IMR-90 (cell line): ENCODE measurements at regions of chr11 and their contacts with region 1.

Region 1: DNA sequence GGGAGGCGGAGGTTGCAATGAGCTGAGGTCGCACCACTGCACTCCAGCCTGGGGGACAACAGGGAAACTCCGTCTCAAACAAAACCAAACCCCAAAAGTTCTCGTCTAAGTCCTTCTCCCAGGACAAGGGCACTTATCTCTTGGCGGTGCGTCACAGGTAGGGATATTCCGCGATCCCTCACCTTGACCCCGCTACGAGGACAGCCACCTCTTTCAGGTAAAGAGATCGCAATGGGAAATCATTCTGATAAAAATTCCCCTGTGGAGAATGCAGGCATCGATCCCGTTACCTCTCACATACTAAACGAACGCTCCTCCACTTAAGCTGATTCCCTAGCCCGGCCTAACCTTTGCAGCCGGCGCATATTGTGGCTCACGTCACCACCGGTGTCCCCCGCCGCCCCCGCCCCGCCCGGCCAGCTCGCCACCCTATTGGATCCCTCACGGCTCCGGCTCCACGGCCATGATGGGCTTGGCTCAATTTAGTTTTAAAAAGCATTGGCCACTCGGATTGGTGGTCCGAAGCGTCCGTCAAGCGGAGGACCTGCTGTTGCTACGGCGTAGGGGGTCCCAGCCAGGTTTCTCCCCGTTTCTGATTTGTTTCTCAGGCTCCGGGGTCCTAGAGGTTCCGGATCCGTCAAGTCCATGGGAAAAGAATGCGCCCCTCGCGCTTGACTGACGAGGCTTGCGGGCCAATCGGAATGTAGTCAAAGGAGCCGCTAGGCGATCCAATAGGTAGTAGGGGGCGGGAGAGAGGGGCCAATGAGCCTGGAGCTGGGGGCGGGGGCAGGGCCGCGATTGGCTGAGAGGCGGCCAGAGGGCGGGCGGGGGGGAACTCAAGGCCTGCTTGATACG is 439 bp upstream of the PPP6R3 start:
- DNase-seq: peak; percentile 98
- ATAC-seq: peak; percentile 91
- H3K4me3 ChIP-seq: peak overlapping the region; percentile 90
- H3K27ac ChIP-seq: peak overlapping the region; percentile 88
- H3K4me1 ChIP-seq: peaks cover 5% of the 10 kb centered on the region
- H3K27me3 ChIP-seq: peaks cover 3% of the 10 kb centered on the region; the same call in 1 of the 2 replicates
- CTCF ChIP-seq: no peak
- POLR2A ChIP-seq: no peak
- RAD21 ChIP-seq: no peak

Region 2: DNA sequence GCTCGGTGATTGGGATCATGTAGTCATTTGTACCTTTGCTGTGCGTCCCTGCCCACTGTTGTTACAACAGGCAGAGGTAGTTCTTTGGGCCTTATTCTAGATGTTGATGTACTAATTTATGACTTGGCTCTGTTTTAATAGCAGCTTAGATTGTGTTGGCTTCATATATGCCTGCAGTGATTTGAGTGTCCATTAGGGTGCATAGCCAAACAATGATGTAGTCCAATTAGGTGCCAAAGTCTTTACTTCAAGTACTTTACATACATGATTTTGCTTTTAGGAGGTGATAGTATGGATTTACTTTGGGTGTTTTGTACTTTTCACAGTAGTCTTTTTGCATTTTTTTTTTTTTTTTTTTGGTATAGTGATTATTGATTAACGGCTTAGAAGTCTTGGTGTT is 46.8 kb after region 1 on chr11:
- CTCF ChIA-PET with region 1: no interaction called
- POLR2A ChIA-PET with region 1: no interaction called
- dilution Hi-C with region 1: no loop called
- in situ Hi-C with region 1: no loop called
- intact Hi-C with region 1: loop called (anchors 5 kb)
- DNase-seq: no peak
- ATAC-seq: no peak
- H3K4me3 ChIP-seq: no peak overlapping the region
- H3K27ac ChIP-seq: no peak overlapping the region
- H3K4me1 ChIP-seq: peaks cover 8% of the 10 kb centered on the region
- H3K27me3 ChIP-seq: no peaks in the 10 kb centered on the region
- CTCF ChIP-seq: 0 out of 2 replicates have a peak, but pooled peaks have one; percentile 2
- POLR2A ChIP-seq: no peak
- RAD21 ChIP-seq: no peak

Region 3: GRCh38 chr11:68574308-68574707 is 114.2 kb after region 1 on chr11:
- CTCF ChIA-PET with region 1: no interaction called
- POLR2A ChIA-PET with region 1: no interaction called
- dilution Hi-C with region 1: no loop called
- in situ Hi-C with region 1: no loop called
- intact Hi-C with region 1: loop called (anchors 10 kb)
- DNase-seq: peak; percentile 75
- ATAC-seq: peak; percentile 79
- H3K4me3 ChIP-seq: no peak overlapping the region
- H3K27ac ChIP-seq: no peak overlapping the region
- H3K4me1 ChIP-seq: peaks cover 4% of the 10 kb centered on the region
- H3K27me3 ChIP-seq: no peaks in the 10 kb centered on the region
- CTCF ChIP-seq: no peak
- POLR2A ChIP-seq: no peak
- RAD21 ChIP-seq: no peak